ENCODE measurements at regions of chr2 and their contacts with region 1.

Region 1: DNA sequence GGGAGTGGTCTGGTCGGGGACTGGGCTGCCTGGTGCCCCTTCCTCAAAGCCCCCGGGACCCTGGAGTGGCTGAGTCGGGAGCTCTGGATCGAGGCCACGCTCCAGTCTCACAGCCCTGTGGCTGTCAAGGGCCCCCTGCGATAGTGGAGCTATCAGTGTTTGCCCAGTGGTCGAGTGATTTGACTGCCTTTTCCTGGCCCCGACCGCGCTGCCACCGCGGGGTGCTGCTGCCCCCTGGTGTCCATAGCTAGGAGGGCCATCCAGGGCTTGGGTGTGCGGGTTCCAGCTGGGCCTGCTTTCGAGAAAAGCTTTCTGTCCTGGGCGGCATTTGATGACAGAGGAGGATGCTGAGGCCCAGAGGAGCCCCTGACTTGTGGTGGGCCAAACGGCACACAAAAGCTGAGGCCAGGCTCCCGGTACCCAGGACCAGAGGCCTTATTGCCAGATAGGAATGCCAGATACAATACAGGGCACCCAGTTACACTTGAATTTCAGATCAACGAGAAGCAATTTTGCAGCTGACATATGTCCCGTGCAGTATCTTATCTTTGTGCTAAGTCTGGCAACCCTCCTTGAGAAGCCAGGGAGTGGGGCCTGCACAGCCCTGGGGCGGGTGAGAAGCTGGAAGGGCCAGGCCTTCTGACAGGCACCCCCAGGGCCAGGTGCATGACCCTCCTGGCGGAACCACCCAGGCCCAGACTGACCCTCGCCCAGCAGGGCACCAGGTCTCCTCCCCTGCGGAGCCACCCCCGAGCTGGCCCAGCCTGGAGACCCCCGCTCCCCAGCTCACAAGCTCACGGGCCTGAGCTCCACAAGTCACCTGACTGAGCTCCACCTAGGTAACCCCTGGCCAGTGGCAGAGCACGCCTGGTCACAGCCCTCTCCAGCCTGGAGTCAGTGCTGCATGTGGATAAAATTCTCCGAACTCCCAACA is 13.0 kb downstream of the ODC1 start:
- DNase-seq: peak; percentile 84
- ATAC-seq: peak; percentile 81
- H3K4me3 Mint-ChIP-seq: no peak overlapping the region
- H3K27ac Mint-ChIP-seq: no peak overlapping the region
- H3K4me1 Mint-ChIP-seq: no peaks in the 10 kb centered on the region
- H3K27me3 Mint-ChIP-seq: no peaks in the 10 kb centered on the region; the same call in 1 of the 2 replicates
- CTCF ChIP-seq: peak; percentile 87

Region 2: DNA sequence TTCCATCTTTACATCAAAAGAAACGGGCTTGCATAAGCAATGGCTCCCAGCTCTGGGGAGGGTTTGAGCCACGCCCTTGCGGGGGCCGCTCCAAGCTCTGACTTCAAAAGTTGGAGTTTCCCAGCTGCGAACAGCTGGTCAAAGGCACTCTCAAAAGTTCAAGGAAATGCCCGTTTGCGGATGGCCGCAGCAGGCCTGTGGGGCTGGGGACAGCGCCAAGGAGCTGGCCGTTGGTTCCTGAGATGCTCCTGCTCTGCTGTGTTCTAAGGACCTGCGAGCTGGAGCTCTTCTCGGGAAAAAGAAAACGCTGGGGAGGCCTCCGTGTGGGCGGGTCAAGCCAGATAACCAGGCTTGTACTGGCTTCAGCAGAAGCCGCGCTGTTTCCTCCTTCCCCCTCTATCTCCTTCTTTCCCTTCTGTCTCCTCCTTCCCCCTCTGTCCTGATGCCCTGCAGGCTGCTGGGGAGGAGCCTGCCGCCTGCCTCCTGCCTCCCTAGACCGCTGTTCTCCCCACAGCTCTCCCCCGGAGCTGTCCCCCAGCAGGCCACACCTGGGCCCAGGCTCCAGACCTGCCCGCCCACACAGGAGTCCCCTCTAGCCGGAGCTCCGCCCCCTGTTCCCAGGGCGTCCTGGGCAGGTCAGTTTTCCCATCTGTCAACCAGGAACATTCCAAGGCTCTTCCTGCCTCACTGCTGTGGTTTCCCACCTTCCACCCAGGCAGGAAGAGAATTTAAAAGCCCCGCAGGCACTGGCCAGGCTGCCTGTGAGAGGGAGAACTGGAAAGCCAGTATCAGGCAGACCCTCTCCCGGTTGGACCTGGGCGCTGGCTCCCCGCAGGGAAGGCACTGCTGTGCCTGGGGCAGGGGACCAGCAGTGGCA is 377.7 kb before region 1 on chr2:
- CTCF ChIA-PET with region 1: interaction called, 10 read pairs
- POLR2A ChIA-PET with region 1: no interaction called
- DNase-seq: peak; percentile 92
- ATAC-seq: peak; percentile 94
- H3K4me3 Mint-ChIP-seq: peak overlapping the region; percentile 85
- H3K27ac Mint-ChIP-seq: peak overlapping the region; percentile 98
- H3K4me1 Mint-ChIP-seq: peaks cover 28% of the 10 kb centered on the region
- H3K27me3 Mint-ChIP-seq: no peaks in the 10 kb centered on the region
- CTCF ChIP-seq: no peak

Region 3: GRCh38 chr2:10122386-10123280 is 312.5 kb before region 1 on chr2 and contains the start of gene RRM2:
- CTCF ChIA-PET with region 1: interaction called, 47 read pairs
- POLR2A ChIA-PET with region 1: interaction called, 3 read pairs
- DNase-seq: peak; percentile 96
- ATAC-seq: peak; percentile 90
- H3K4me3 Mint-ChIP-seq: peak within 1 kb of the TSS; percentile 91
- H3K27ac Mint-ChIP-seq: peak within 1 kb of the TSS; percentile 97
- H3K4me1 Mint-ChIP-seq: peaks cover 36% of the 10 kb centered on the region
- H3K27me3 Mint-ChIP-seq: no peaks in the 10 kb centered on the region; the same call in 1 of the 2 replicates
- CTCF ChIP-seq: no peak
- total RNA-seq, gene RRM2: 119 to 129 TPM (median 126 TPM) in 3 replicates

Region 4: DNA sequence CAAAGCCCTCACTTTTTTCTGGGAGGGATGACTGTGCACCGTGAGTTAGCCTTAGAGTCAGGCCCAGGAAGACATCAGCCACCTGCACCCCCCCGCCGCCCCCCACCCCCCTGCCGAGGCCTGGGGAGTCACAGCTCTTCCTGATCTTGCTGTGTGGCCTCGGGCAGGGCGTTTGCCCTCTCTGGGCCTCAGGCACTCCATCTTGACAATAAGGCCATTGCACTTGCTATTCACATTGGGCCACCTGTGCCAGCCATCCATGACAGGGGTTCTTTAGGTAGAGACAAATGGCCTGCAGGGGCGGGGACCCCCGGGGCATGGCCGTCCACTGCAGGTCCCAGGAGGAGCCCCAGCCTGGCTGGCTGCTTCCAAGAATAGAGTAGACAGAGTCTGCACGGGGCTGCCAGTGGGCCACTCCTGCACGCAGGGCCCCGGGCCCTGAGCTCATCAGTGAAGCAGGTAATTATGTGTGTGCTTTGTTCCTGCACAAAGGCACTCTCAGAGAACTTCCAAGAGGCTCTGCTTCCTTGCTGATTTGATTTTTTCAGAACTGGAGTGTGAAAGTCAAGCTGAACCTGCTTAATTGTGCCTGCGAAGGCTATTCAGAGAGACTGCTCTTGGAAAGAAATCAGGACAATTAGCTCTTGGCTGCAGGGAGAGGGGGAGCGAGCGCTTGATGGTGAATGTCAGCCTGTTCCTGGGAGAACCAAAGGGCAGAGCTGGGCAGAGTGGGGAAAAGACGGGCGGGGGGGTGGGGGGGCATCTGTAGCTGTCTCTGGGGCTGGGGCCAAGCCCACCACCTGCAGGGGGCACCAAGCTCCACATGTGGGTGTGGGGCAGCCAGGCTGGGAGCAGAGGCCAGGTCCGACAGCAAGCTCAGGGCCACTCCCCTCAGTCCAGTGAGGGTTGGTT is 272.3 kb before region 1 on chr2:
- CTCF ChIA-PET with region 1: interaction called, 23 read pairs
- POLR2A ChIA-PET with region 1: no interaction called
- DNase-seq: peak; percentile 56
- ATAC-seq: peak; percentile 66
- H3K4me3 Mint-ChIP-seq: no peak overlapping the region
- H3K27ac Mint-ChIP-seq: peak overlapping the region; percentile 91
- H3K4me1 Mint-ChIP-seq: 0 out of 2 replicates have a peak, but pooled peaks cover 3% of the 10 kb centered on the region
- H3K27me3 Mint-ChIP-seq: no peaks in the 10 kb centered on the region
- CTCF ChIP-seq: no peak

Region 5: GRCh38 chr2:10254373-10255151 is 180.6 kb before region 1 on chr2:
- CTCF ChIA-PET with region 1: interaction called, 14 read pairs
- POLR2A ChIA-PET with region 1: no interaction called
- DNase-seq: peak; percentile 11
- ATAC-seq: 0 out of 2 replicates have a peak, but pooled peaks have one; percentile 21
- H3K4me3 Mint-ChIP-seq: no peak overlapping the region
- H3K27ac Mint-ChIP-seq: no peak overlapping the region
- H3K4me1 Mint-ChIP-seq: no peaks in the 10 kb centered on the region
- H3K27me3 Mint-ChIP-seq: no peaks in the 10 kb centered on the region
- CTCF ChIP-seq: no peak

Region 6: GRCh38 chr2:10302479-10303180 is 132.5 kb before region 1 on chr2 and contains the start of gene HPCAL1:
- CTCF ChIA-PET with region 1: interaction called, 51 read pairs
- POLR2A ChIA-PET with region 1: no interaction called
- DNase-seq: peak; percentile 97
- ATAC-seq: peak; percentile 97
- H3K4me3 Mint-ChIP-seq: peak within 1 kb of the TSS; percentile 84
- H3K27ac Mint-ChIP-seq: 0 out of 2 replicates have a peak within 1 kb of the TSS, but pooled peaks have one; percentile 42
- H3K4me1 Mint-ChIP-seq: peaks cover 24% of the 10 kb centered on the region
- H3K27me3 Mint-ChIP-seq: peaks cover 52% of the 10 kb centered on the region
- CTCF ChIP-seq: peak; percentile 31
- total RNA-seq, gene HPCAL1: 10.5 to 12.4 TPM (median 11.8 TPM) in 3 replicates

Region 7: GRCh38 chr2:10337449-10338269 is 97.5 kb before region 1 on chr2:
- CTCF ChIA-PET with region 1: no interaction called
- POLR2A ChIA-PET with region 1: no interaction called
- DNase-seq: no peak
- ATAC-seq: no peak
- H3K4me3 Mint-ChIP-seq: no peak overlapping the region
- H3K27ac Mint-ChIP-seq: no peak overlapping the region
- H3K4me1 Mint-ChIP-seq: peaks cover 11% of the 10 kb centered on the region
- H3K27me3 Mint-ChIP-seq: no peaks in the 10 kb centered on the region
- CTCF ChIP-seq: no peak

Region 8: DNA sequence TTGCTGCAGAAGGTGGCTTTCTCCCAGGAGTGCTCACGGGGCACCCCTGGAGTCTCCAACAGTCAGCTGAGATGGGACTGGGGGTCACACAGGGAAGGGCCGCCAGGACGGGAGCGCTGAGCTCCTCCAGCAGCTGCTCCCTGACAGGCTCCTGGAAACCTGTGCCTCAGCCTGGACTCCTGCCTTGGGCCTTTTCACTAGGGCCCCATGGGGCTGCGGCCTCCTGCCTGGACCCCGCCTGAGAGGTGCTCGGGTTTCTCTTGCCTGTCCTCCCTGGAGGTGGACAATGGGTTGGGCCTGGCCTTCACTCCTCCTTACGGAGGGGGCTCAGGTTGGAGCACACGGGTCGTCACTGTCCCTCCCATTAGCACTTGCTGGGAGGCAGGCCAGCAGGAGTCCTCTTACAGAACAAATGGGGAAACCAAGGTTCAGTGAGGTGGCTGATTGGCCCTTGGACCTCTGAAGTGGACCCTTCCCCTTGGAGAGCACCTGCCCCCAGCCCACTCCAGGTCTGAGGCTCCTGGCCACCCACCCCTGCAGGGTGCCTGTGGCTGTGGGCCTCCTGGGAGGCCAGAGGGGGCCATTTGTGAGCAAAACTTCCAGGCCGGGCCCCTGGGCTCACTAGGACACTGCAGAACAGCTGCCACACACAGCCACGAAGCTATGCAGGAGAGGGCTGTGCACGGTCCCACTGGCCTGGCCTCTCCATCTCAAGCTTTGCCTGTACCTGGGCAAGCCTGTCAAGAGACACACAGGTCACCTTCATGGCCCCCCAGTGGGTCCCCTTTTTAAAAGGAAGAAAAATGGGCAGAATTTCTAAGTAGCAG is 70.1 kb after region 1 on chr2:
- CTCF ChIA-PET with region 1: no interaction called
- POLR2A ChIA-PET with region 1: no interaction called
- DNase-seq: no peak
- ATAC-seq: no peak
- H3K4me3 Mint-ChIP-seq: no peak overlapping the region
- H3K27ac Mint-ChIP-seq: no peak overlapping the region
- H3K4me1 Mint-ChIP-seq: no peaks in the 10 kb centered on the region
- H3K27me3 Mint-ChIP-seq: peaks cover 3% of the 10 kb centered on the region; the same call in 1 of the 2 replicates
- CTCF ChIP-seq: no peak

Region 9: DNA sequence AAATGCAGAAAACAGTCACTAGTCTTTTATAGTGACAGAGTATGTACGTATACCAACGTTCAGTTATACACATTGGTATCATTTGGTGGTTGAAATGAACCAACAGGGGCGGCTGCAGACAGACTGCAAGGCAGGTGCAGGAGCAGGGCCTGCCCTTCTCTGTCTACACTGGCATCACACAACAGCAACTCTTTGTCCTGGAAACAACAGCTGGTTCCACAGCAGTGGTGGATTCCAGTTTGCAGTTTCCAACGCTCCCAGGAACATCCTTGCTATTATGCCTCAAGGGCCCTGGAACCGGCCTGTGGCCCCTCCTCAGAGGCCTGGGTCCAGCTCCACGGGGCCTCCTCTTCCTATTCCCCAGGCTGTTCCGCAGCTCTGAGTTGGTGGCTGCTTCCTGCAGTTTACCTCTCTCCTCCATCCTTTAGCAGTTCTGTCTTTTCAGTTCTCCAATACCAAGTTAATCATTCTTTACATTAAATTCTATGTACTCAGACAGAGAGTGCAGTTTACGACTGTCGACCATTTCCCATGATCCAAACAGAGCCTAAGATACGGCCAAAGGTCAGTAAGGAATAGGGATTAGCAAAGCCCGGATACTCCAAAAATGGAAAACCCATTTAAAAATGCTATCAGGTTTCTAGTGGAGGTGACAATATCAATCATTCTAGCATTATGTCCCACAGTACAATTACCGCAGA is 166.9 kb after region 1 on chr2:
- CTCF ChIA-PET with region 1: no interaction called
- POLR2A ChIA-PET with region 1: no interaction called
- DNase-seq: no peak
- ATAC-seq: no peak
- H3K4me3 Mint-ChIP-seq: no peak overlapping the region
- H3K27ac Mint-ChIP-seq: no peak overlapping the region
- H3K4me1 Mint-ChIP-seq: no peaks in the 10 kb centered on the region
- H3K27me3 Mint-ChIP-seq: no peaks in the 10 kb centered on the region
- CTCF ChIP-seq: no peak

Measured in WTC11 (cell line).